ENCODE measurements at regions of chr1 and their contacts with region 1.

Region 1: GRCh38 chr1:161374373-161374772 is 6.7 kb upstream of the CFAP126 start:
- DNase-seq: peak; percentile 22
- ATAC-seq: peak; percentile 68
- H3K4me3 ChIP-seq: no peak overlapping the region
- H3K27ac ChIP-seq: no peak overlapping the region
- H3K4me1 ChIP-seq: peaks cover 16% of the 10 kb centered on the region
- H3K27me3 ChIP-seq: no peaks in the 10 kb centered on the region
- CTCF ChIP-seq: peak; percentile 51
- EP300 ChIP-seq: no peak
- POLR2A ChIP-seq: no peak
- RAD21 ChIP-seq: no peak

Region 2: DNA sequence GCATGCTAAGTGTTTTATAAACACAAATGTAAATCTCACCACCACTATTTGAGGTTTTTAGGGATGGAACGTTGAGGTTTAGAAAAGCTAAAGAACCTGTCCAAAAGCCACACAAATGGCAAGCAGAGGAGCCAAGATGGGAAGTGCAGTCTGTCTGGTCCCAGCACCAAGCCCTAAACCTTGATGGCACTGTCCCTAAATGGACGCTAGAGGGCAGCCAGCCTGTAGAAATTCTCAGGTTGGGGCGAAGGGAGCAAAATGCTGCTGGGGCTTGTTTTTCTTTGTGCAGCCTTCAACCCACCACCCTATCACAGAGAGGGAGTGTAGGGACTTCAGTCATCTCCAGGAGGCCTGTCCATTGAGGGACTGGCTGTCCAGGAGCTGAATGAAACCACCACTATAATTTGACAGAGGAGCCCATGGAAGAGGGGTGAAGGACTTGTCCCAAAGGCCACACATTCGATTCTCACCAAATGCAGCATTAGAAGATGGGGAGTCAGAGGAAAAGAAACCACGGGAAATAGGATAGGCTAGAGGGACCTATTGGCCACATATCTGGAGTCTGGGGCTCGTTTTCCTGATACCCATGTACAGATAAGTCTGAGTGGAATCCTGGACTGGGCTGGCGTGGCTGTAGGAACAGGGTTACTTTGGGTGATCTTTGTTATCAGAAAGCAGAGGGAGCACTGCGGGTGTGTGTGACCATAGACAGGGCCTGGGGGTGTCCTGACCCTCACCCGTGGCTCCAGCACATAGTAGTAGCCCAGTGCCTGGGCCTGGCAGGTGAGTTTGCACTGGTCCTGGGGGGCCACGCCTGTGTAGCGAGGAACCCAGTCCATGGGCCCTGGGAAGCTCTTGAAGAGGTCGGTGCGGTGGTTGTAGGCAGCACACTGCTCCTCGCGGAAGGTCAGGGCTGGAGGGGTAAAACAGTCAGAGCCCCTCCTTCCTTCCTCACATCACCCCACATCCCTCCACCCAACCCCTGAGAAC is 181.6 kb before region 1 on chr1:
- CTCF ChIA-PET with region 1: interaction called, 7 read pairs
- POLR2A ChIA-PET with region 1: no interaction called
- in situ Hi-C with region 1: no loop called
- intact Hi-C with region 1: loop called (anchors 2 kb)
- DNase-seq: peak; percentile 72
- ATAC-seq: peak; percentile 85
- H3K4me3 ChIP-seq: no peak overlapping the region
- H3K27ac ChIP-seq: no peak overlapping the region
- H3K4me1 ChIP-seq: peaks cover 30% of the 10 kb centered on the region
- H3K27me3 ChIP-seq: no peaks in the 10 kb centered on the region
- CTCF ChIP-seq: peak; percentile 92
- EP300 ChIP-seq: no peak
- POLR2A ChIP-seq: no peak
- RAD21 ChIP-seq: peak; percentile 79

Region 3: GRCh38 chr1:161209790-161210409 is 164.5 kb before region 1 on chr1:
- CTCF ChIA-PET with region 1: interaction called, 4 read pairs
- POLR2A ChIA-PET with region 1: no interaction called
- in situ Hi-C with region 1: no loop called
- intact Hi-C with region 1: loop called (anchors 1 kb)
- DNase-seq: peak; percentile 79
- ATAC-seq: peak; percentile 96
- H3K4me3 ChIP-seq: no peak overlapping the region
- H3K27ac ChIP-seq: no peak overlapping the region
- H3K4me1 ChIP-seq: peaks cover 25% of the 10 kb centered on the region
- H3K27me3 ChIP-seq: no peaks in the 10 kb centered on the region
- CTCF ChIP-seq: peak; percentile 97
- EP300 ChIP-seq: no peak
- POLR2A ChIP-seq: no peak
- RAD21 ChIP-seq: peak; percentile 95

Region 4: GRCh38 chr1:161305867-161306519 is 68.4 kb before region 1 on chr1:
- CTCF ChIA-PET with region 1: no interaction called
- POLR2A ChIA-PET with region 1: no interaction called
- in situ Hi-C with region 1: no loop called
- intact Hi-C with region 1: loop called (anchors 1 kb)
- DNase-seq: peak; percentile 47
- ATAC-seq: peak; percentile 83
- H3K4me3 ChIP-seq: peak overlapping the region; percentile 45 to 73 (median 63); a peak in 5 of 6 replicates
- H3K27ac ChIP-seq: peak overlapping the region; percentile 33
- H3K4me1 ChIP-seq: peaks cover 67% of the 10 kb centered on the region
- H3K27me3 ChIP-seq: no peaks in the 10 kb centered on the region
- CTCF ChIP-seq: peak; percentile 57
- EP300 ChIP-seq: no peak
- POLR2A ChIP-seq: peak in 1 of 2 experiments; percentile 62; a peak in 1 of 4 replicates
- RAD21 ChIP-seq: no peak

Region 5: GRCh38 chr1:161427733-161428516 is 53.6 kb after region 1 on chr1:
- CTCF ChIA-PET with region 1: no interaction called
- POLR2A ChIA-PET with region 1: no interaction called
- in situ Hi-C with region 1: no loop called
- intact Hi-C with region 1: no loop called
- DNase-seq: peak; percentile 35
- ATAC-seq: peak; percentile 66
- H3K4me3 ChIP-seq: peak overlapping the region; percentile 33 to 60 (median 43)
- H3K27ac ChIP-seq: no peak overlapping the region
- H3K4me1 ChIP-seq: peaks cover 23% of the 10 kb centered on the region
- H3K27me3 ChIP-seq: no peaks in the 10 kb centered on the region; a peak in 1 of 5 replicates
- CTCF ChIP-seq: no peak
- EP300 ChIP-seq: peak in 1 of 2 experiments; percentile 27; a peak in 1 of 4 replicates
- POLR2A ChIP-seq: no peak
- RAD21 ChIP-seq: no peak

Region 6: DNA sequence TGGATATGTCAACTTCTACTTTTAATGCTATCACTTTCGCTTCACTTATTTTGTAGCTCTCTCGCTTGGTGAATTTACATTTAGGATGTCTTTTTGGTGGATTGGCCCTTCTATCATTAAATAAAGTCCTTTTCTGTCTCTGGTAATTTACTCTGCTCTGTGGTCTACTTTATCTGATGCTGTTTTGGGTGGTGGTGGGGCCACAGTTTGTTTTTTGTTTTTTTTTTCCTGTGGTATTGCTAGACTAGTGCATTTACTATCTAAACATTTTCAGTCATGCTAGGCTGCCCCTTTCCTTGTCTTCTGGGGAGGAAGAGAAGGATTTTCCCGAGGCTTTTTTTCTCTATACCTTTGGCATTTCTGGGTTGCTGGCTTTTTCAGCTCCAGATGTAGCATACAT is 314.6 kb after region 1 on chr1:
- CTCF ChIA-PET with region 1: no interaction called
- POLR2A ChIA-PET with region 1: no interaction called
- in situ Hi-C with region 1: no loop called
- intact Hi-C with region 1: no loop called
- DNase-seq: no peak
- ATAC-seq: no peak
- H3K4me3 ChIP-seq: no peak overlapping the region
- H3K27ac ChIP-seq: no peak overlapping the region
- H3K4me1 ChIP-seq: no peaks in the 10 kb centered on the region
- H3K27me3 ChIP-seq: no peaks in the 10 kb centered on the region
- CTCF ChIP-seq: no peak
- EP300 ChIP-seq: no peak
- POLR2A ChIP-seq: no peak
- RAD21 ChIP-seq: no peak